Gastrocnemius medialis (tissue), 4 donors: ENCODE measurements at regions of chr3 and their contacts with region 1.

Region 1: DNA sequence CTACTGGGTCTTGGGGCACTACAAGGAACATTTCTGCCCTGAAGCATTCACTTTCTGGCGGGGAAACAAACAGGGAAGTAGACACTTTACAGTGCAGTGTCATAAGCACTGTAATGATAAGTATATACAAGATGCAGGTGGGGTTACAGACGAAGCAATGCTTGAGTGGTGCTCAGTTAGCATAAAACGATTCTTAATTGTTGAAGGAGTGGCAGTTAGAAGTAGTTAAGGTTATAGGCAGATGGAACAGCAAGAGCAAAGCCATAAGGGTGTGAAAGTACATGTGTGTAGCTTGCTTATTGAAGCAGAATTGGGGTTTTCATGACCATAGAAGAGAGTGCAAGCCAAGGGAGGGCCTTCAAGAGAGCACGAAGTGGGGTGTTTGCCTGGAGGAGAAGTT is 46.2 kb downstream of the SLC25A26 start:
- DNase-seq: no peak
- ATAC-seq: no peak
- H3K4me3 ChIP-seq: no peak overlapping the region
- H3K27ac ChIP-seq: no peak overlapping the region
- H3K4me1 ChIP-seq: peaks cover 8 to 28% of the 10 kb centered on the region in 2 donors
- H3K27me3 ChIP-seq: no peaks in the 10 kb centered on the region
- CTCF ChIP-seq: no peak
- POLR2A ChIP-seq: no peak

Region 2: DNA sequence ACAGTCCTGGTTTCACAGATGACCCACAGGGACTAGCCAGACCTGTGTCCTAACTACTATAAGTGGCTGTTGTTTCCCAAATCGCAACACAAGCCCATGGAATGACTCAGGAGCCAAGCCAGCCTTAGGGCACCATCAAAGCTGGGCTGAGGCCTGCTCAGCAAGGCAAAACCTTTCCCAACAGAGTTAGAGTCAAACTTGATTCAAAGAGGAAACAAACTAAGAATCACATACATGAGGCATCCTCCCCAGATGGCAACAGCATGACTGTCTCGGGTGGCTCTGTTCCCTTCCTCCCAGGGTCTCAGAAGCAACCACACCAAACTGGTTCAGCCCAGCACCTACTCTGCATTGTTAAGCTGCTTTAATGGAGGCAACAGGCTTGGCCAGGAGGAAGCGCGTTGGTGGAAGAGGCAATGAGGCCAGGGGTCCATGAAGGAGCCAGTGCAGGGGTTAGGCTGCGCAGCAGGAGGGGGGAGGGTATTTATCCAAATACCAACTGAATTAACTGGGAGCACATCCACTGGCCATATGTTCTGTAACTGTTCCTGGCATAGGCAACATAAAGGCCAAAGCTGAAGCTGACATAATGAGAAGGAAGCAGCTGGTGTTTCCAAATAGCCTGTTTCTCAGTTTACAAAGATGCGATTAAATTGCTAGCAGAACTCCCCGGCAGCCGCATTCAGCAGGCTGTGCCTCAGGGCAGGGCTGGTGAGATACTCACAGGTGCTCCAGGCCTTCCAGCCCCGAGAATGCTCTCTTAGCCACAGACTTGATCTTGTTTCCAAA is 131.4 kb after region 1 on chr3:
- in situ Hi-C with region 1: no loop called
- intact Hi-C with region 1: loop called (anchors 5 kb)
- DNase-seq: peak; percentile 52 to 67
- ATAC-seq: peak; percentile 68 to 72
- H3K4me3 ChIP-seq: no peak overlapping the region
- H3K27ac ChIP-seq: peak overlapping the region; percentile 38 to 87 (median 78)
- H3K4me1 ChIP-seq: peaks cover 60 to 72% of the 10 kb centered on the region in 2 donors
- H3K27me3 ChIP-seq: no peaks in the 10 kb centered on the region
- CTCF ChIP-seq: no peak
- POLR2A ChIP-seq: peak in 1 of 2 donors; percentile 17

Region 3: DNA sequence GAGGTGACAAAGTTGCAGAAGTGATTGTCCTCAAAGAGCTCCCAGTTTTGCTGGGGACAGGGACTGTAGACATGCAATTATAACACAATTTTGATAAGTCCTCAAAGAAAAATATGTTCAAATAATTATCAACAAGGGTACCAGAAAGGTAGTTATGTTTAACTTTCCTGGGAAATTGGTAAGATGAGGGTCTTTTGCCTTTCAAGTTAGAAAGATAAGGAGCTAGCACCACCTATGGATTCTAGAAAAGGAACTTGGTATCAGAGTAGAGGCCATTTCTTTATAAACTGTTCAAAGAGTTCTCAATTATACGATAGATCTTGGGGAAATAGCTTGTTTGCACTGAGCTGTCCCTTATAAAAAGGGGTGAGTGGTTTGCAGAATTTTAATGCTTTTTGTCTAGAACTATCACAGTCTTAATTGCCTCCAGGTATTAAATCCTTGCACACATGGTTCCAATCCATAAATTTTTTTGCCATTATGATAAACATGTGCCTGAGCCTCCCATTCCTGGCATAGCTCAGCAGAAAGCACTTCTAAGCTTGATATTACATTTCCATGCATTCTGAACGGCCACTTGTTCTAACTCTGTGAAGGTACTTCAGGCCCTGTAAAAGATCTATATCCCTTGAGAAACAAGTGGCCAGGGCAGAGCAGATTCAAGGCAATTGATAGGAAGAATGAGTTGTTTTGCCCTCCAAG is 481.3 kb after region 1 on chr3:
- in situ Hi-C with region 1: no loop called
- intact Hi-C with region 1: no loop called
- DNase-seq: no peak
- ATAC-seq: no peak
- H3K4me3 ChIP-seq: no peak overlapping the region
- H3K27ac ChIP-seq: no peak overlapping the region
- H3K4me1 ChIP-seq: no peaks in the 10 kb centered on the region
- H3K27me3 ChIP-seq: no peaks in the 10 kb centered on the region
- CTCF ChIP-seq: no peak
- POLR2A ChIP-seq: no peak